Endothelial cell of umbilical vein (primary cell): ENCODE measurements at regions of chr3 and their contacts with region 1.

Region 1: GRCh38 chr3:139111392-139112229 is 66.9 kb upstream of the PRR23C start:
- DNase-seq: peak; percentile 34
- H3K4me3 ChIP-seq: no peak overlapping the region
- H3K27ac ChIP-seq: no peak overlapping the region
- H3K4me1 ChIP-seq: no peaks in the 10 kb centered on the region
- H3K27me3 ChIP-seq: no peaks in the 10 kb centered on the region
- CTCF ChIP-seq: peak; percentile 70 to 87
- POLR2A ChIP-seq: no peak

Region 2: DNA sequence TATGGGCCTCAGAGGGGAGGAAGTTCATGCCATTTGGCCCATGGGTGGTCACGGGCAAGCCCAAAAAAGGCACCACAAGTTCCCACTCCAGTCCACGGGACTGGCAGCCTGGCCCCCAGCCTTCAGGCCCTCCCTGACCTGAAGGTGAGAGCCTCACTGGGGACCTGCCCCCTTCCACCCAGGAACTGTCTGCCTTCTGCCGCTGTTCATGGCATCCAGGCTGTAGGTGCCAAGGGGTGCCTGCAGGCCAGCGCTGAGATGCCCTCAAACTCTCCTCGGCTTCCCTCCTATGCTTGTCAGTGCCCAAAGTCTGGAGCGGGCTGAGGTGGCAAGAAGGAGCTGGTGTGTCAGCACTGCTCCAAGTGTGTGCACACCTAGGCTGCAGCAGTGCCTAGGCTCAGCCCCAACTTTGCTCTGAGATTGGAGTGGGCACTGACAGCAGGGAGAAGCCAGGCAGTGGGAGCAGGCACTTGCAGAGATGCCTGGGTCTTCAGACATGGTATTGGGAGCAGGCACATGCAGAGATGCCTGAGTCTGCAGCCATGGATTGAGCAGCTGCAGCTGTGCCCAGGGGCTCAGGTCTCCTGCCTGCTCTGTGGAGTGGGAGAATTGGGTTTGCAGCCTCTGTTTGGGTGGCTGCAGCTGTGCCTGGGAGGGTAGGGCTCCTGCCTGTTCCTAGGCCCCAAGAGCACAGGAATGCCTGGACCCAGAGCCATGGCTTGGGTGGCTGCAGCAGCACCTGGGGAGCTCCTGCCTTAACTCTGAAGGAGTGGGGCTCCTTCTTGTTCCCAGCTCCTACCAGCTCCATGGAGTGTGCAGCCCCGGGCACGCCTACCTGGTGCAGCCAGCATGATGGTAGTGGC is 22.9 kb before region 1 on chr3:
- CTCF ChIA-PET with region 1: interaction called, 21 read pairs
- POLR2A ChIA-PET with region 1: no interaction called
- dilution Hi-C with region 1: no loop called
- intact Hi-C with region 1: no loop called
- DNase-seq: no peak
- H3K4me3 ChIP-seq: no peak overlapping the region
- H3K27ac ChIP-seq: no peak overlapping the region
- H3K4me1 ChIP-seq: no peaks in the 10 kb centered on the region
- H3K27me3 ChIP-seq: no peaks in the 10 kb centered on the region
- CTCF ChIP-seq: no peak
- POLR2A ChIP-seq: no peak

Region 3: DNA sequence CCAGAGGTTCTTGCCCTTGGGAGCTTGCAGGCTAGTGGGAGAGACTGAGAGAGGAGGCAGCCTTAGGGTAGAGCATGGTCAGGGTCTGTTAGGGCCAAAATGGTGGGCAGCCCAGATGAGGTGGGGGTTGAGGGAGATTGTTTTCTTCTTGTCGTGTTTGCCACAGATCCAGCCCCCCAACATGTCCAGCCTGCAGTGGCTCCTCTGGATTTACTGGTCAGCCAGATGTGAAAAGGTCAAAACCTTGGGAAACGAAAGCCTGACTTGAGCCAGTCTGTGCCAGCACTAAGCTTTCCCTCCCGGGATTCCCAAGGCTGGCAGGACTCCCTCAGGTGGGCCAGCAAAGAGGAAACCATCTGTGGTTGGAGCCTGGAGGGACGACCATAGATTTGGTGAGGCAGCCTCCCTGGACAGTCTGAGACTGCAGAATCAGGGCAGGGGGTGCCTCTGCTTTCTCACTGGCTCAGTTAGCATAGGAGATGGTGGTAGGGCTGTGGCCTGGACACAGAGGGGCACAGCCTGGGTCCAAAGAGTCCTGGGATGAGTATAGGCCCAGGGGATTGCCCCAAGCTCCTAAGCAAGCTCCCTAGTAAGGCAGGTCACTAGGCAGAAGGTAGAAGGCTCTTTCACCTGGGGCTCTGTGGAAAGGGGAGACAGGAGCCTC is 15.7 kb before region 1 on chr3:
- CTCF ChIA-PET with region 1: interaction called, 31 read pairs
- POLR2A ChIA-PET with region 1: no interaction called
- dilution Hi-C with region 1: no loop called
- intact Hi-C with region 1: no loop called
- DNase-seq: no peak
- H3K4me3 ChIP-seq: no peak overlapping the region
- H3K27ac ChIP-seq: no peak overlapping the region
- H3K4me1 ChIP-seq: no peaks in the 10 kb centered on the region
- H3K27me3 ChIP-seq: no peaks in the 10 kb centered on the region
- CTCF ChIP-seq: no peak
- POLR2A ChIP-seq: no peak

Region 4: GRCh38 chr3:139101396-139101795 is 10.2 kb before region 1 on chr3:
- CTCF ChIA-PET with region 1: interaction called, 31 read pairs
- POLR2A ChIA-PET with region 1: no interaction called
- dilution Hi-C with region 1: no loop called
- intact Hi-C with region 1: no loop called
- DNase-seq: no peak
- H3K4me3 ChIP-seq: no peak overlapping the region
- H3K27ac ChIP-seq: no peak overlapping the region
- H3K4me1 ChIP-seq: no peaks in the 10 kb centered on the region
- H3K27me3 ChIP-seq: no peaks in the 10 kb centered on the region
- CTCF ChIP-seq: no peak
- POLR2A ChIP-seq: no peak

Region 5: GRCh38 chr3:139329345-139329850 is 217.8 kb after region 1 on chr3:
- CTCF ChIA-PET with region 1: interaction called, 140 read pairs
- POLR2A ChIA-PET with region 1: no interaction called
- dilution Hi-C with region 1: no loop called
- intact Hi-C with region 1: loop called (anchors 1 kb)
- DNase-seq: peak; percentile 74
- H3K4me3 ChIP-seq: no peak overlapping the region
- H3K27ac ChIP-seq: no peak overlapping the region
- H3K4me1 ChIP-seq: peaks cover 3% of the 10 kb centered on the region
- H3K27me3 ChIP-seq: peaks cover 2 to 15% of the 10 kb centered on the region in 2 experiments
- CTCF ChIP-seq: peak; percentile 99
- POLR2A ChIP-seq: no peak

Region 6: DNA sequence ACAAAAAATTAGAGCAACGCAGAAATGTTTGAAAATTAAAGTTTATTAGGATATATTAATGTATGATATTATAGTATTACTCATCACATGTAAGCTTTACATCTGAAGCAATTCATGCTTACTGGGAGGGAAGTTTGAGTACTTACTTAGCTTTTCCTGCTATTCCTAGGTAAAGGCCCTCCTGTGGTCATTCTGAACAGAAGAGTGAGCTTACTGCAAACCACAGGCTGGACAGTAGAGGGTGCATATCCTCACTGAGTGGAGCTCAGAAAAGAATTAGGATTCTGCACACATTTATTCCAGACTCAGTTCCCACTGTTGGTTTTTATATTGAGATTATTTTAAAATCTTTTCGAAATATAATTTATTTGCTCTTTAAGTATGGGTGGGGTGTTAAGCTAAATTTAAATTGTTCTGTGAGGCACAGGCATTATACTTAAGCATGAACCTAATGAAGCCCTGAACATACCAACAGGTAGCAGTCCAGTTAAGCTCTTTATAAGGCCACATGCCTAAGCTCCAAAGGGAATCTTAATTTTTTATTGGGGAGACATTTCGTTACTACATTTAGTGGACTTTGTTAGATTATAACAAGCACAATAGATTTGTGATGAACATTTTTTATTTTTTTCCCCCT is 242.4 kb after region 1 on chr3:
- CTCF ChIA-PET with region 1: interaction called, 15 read pairs
- POLR2A ChIA-PET with region 1: no interaction called
- dilution Hi-C with region 1: no loop called
- intact Hi-C with region 1: no loop called
- DNase-seq: peak; percentile 65
- H3K4me3 ChIP-seq: no peak overlapping the region
- H3K27ac ChIP-seq: no peak overlapping the region
- H3K4me1 ChIP-seq: no peaks in the 10 kb centered on the region
- H3K27me3 ChIP-seq: no peaks in the 10 kb centered on the region
- CTCF ChIP-seq: peak; percentile 69 to 77
- POLR2A ChIP-seq: no peak

Region 7: GRCh38 chr3:139455855-139456254 is 344.2 kb after region 1 on chr3:
- CTCF ChIA-PET with region 1: no interaction called
- POLR2A ChIA-PET with region 1: no interaction called
- dilution Hi-C with region 1: no loop called
- intact Hi-C with region 1: no loop called
- DNase-seq: no peak
- H3K4me3 ChIP-seq: no peak overlapping the region
- H3K27ac ChIP-seq: no peak overlapping the region
- H3K4me1 ChIP-seq: no peaks in the 10 kb centered on the region
- H3K27me3 ChIP-seq: no peaks in the 10 kb centered on the region
- CTCF ChIP-seq: no peak
- POLR2A ChIP-seq: no peak